ENCODE measurements at regions of chr17 and their contacts with region 1.

Region 1: DNA sequence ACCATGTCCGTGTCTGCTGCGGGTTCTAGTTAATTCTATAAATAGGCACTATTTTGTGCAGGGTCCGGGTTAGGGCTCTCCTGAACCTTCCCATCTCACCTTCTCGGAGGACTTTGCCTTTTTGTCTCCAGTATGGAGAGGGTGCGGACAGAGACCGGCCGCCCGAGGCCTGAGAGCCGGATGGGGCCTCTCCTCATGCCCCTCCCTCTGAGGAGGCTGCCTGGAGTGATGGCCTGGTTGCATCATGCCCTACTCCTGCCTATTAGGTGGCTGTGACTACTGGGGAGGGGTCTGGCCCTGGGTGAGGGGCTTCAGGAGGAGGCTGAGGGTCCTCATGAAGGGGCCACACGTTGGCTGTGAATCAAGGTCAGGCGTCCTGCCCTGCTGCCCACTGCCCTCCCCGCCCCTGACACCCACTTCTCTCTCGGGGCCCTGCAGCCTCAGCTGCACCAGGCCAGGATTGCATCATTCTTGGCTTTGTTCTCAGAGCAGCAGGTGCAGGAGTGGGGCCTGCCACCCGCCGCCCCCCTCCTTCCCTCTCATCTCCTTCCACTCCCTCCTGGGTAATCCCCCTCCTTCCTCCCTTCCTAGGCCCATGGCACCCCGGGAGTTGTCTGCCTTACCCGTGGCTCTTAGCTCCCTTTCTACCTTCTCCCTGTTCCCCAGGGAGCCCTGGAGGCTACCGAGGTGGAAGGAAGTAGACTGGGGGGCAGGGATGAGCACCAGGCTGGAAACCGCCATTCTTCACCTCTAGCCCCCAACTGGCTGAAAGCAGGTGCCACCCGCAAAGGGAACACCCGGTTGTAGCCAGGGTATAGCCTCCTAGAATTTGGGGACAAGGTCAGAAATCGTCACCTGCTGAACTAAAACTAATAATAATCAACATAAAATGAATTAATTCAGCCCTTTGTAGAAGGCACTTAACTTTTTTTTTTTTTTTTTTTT is 12.7 kb upstream of the ARHGAP23 start:
- DNase-seq: no peak
- H3K4me3 ChIP-seq: no peak overlapping the region
- H3K27ac ChIP-seq: no peak overlapping the region
- H3K4me1 ChIP-seq: no peaks in the 10 kb centered on the region
- H3K27me3 ChIP-seq: no peaks in the 10 kb centered on the region
- CTCF ChIP-seq: no peak
- POLR2A ChIP-seq: no peak

Region 2: DNA sequence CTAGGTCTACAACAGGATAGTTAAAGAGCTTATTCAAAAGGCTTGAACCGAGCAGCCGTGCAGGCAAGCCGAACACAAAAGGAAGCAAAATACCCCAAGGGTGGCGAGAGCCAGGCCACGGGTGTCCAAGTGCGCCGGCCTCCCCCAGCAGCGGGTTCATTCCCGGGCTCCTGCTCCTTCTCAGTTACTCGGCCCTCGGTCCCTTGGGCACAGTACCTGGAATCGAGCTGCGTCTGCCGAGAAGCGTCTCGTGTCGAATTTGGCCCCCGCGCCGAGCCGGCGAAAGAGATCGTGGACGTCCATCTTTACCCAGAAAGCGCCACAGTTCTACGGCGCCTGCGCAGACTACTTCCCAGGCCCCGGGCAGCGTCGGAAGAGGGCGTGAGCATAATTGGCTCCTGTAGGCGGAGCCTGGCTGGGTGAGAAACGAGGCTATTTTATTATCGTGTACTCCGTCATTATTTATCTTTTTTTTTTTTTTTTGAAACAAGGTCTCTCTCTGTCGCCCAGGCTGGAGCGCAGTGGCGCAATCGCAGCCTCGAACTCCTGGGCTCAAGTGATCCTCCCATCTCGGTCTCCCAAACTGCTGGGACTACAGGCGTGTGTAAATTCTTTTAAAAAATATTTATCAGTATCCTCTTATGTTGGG is 772.3 kb before region 1 on chr17 and contains the start of gene DDX52:
- intact Hi-C with region 1: no loop called
- DNase-seq: peak; percentile 91
- H3K4me3 ChIP-seq: peak within 1 kb of the TSS; percentile 78 to 86
- H3K27ac ChIP-seq: peak within 1 kb of the TSS; percentile 88
- H3K4me1 ChIP-seq: no peaks in the 10 kb centered on the region
- H3K27me3 ChIP-seq: no peaks in the 10 kb centered on the region
- CTCF ChIP-seq: peak in 2 of 4 experiments; percentile 15 to 35
- POLR2A ChIP-seq: peak; percentile 72
- total RNA-seq, gene DDX52: 14.8 to 17.5 TPM

Region 3: DNA sequence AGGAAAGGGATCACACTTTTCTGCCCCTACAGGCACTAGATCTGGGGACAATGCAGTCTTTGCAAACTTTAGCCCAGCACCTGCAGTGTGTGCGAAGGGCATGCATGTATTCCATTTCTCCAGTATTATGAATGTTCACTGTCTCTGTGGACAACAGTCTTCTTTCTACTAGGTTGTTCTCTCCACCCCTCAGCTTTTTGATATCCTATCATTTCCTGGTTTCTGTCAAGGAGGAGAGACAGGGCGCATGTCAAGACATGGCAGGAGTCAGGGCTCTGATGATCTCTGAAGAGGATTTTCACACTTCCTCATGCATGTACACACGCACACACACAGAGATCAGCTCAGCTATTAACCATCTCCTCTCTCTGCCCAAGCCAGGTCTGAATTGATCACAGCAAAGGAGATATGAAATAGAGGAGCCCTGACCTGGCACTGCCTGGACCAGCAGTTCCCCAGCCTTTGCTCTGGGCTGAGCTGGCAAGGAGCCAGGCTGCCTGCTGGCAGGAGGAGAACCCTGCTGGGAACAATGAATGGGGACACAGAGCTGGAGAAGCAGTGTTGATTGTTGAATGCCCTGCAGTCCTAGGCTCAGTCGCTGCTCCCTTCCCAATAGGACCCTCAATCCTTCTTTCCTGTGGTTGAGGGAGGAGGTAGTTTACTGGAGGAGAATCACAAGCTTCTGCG is 74.3 kb before region 1 on chr17:
- intact Hi-C with region 1: no loop called
- DNase-seq: peak; percentile 69
- H3K4me3 ChIP-seq: no peak overlapping the region
- H3K27ac ChIP-seq: no peak overlapping the region
- H3K4me1 ChIP-seq: no peaks in the 10 kb centered on the region
- H3K27me3 ChIP-seq: no peaks in the 10 kb centered on the region
- CTCF ChIP-seq: peak in 1 of 4 experiments; percentile 8
- POLR2A ChIP-seq: no peak

Region 4: DNA sequence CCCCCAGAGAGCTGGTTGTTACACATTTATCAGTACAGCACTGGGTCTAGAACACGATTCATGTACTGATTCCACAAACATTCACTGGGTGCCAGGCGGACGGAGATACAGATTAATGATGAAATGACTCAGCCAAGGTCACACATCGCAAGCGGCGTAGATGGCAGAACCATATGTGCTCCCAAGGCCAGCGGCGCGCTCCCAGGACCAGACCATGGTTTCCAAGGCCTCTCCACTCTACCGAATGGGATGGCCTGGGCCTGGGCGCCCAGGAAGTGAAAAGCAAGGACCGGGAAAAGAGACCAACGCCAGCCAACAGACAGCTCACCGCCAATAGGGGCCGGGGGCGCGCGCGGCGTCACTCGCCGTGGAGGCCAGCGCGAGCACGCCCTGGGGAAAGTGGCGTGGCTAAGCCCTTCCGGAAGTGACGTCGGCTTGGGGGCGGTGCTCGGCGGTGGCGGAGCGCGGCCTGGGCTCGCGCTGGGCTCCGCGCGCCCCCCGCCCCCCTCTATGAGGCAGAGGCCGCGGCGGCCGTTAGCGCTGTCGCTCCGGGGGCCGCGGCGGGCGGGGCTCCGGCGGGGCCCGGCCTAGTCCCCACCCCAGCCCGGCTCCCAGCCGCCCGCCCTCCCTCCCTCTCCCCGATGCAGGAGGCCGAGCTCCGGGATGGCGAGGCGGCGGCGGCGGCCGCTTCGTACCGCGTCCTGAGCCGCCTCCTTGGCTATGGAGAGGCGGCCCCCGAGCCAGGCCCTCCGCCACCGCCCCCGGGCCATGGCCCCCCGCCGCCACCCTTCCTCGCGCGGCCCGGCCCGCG is 63.9 kb before region 1 on chr17 and contains the start of gene SOCS7:
- intact Hi-C with region 1: loop called (anchors 1 kb)
- DNase-seq: peak; percentile 90
- H3K4me3 ChIP-seq: peak within 1 kb of the TSS; percentile 86 to 96
- H3K27ac ChIP-seq: peak within 1 kb of the TSS; percentile 75 to 89
- H3K4me1 ChIP-seq: peaks cover 11% of the 10 kb centered on the region
- H3K27me3 ChIP-seq: no peaks in the 10 kb centered on the region
- CTCF ChIP-seq: peak in 1 of 4 experiments; percentile 32
- POLR2A ChIP-seq: peak; percentile 77
- total RNA-seq, gene SOCS7: 14.6 to 61.9 TPM

Region 5: DNA sequence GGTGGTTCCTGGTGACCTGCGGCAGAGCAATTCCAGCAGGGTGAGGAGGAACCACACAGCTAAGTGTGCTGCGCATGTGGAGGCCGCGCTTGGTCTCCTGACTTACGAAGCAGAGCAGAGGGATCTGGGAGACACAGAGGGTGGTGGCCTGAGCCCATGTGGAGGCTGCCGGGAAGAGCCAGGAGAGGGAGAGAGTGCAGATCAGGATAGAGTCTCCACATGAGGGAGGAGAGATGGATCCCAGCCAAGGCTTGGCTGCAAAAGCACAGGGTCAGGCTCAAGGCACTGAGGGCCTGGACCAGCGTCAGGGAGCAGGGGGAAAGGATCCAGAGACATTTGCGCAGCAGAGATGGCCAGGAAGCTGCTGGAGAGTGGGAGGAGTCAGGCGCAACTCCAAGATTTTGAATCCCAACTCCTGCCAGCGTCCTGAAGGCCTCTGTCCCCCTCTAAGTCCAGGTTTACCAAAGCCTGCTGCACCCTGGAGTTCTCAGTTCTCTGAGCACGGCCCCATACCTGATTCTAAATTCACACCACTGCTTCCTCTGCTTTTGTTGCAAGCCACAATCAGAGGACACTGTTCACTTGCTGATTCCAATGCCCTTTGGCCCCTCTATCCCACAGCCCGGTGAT is 278.3 kb after region 1 on chr17:
- intact Hi-C with region 1: no loop called
- DNase-seq: peak; percentile 43
- H3K4me3 ChIP-seq: no peak overlapping the region
- H3K27ac ChIP-seq: peak overlapping the region; percentile 38 to 63
- H3K4me1 ChIP-seq: no peaks in the 10 kb centered on the region
- H3K27me3 ChIP-seq: no peaks in the 10 kb centered on the region
- CTCF ChIP-seq: no peak
- POLR2A ChIP-seq: no peak